BJ (cell line): ENCODE measurements at regions of chr20 and their contacts with region 1.

Region 1: GRCh38 chr20:34876162-34877001 is at the start of gene ACSS2:
- DNase-seq: peak; percentile 86
- H3K4me3 ChIP-seq: peak within 1 kb of the TSS; percentile 78
- H3K27me3 ChIP-seq: no peaks in the 10 kb centered on the region
- CTCF ChIP-seq: no peak
- polyA plus RNA-seq, gene ACSS2: 29.3 and 32.1 TPM in 2 replicates

Region 2: DNA sequence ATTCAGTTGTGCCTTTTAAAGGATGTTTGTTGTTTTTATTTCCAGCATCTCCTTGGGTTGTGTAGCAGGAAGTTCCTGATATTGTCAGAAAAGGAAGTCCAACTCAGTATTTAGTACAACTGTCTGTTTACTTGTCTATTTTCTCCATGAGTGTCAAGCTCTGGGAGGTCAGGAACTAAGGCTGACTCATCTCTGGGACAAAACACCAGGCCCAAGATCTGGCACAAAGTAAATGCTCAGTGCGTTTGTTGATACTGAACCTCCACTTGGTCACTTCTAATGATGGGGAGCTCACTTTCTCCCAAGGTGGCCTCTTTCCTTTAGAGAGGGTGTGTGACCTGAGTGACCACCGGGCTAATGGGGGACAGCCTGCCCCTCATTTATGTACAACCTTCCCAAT is 186.9 kb before region 1 on chr20:
- CTCF ChIA-PET with region 1: no interaction called
- POLR2A ChIA-PET with region 1: no interaction called
- DNase-seq: no peak
- H3K4me3 ChIP-seq: no peak overlapping the region
- H3K27me3 ChIP-seq: no peaks in the 10 kb centered on the region
- CTCF ChIP-seq: no peak

Region 3: DNA sequence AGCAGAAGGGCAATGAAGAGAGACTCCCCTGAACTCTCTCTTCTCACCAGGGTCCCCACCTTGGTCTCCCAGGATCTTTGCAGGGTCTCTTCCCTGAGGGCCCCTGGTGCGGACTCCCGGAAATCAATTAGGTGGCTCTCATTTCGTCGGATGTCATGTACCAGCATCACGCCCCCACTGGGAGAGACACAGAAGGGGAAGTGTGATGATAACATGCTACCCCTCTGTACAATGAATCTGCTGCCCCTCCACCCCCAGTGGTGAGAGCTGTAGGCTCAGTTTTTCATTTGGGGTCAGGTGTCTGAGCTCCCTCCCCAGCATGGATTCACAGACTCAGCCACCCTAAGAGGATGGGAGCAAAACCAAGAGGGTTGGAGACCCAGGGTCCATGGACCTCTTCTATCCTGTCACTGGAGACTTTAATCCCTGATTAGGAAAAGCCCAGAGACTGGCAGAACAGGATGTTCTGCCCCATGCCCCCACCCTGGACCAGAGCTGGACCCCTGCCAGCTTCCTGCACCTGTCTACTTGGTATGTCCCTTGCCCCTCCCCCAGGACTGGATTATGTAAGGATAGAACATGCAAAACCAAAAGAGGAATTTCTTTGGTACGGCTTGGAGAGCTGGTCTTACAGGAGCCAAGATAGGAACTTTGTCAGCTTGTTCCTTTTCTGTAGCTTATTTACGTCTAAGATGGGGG is 14.8 kb before region 1 on chr20:
- CTCF ChIA-PET with region 1: interaction called, 12 read pairs
- POLR2A ChIA-PET with region 1: no interaction called
- DNase-seq: no peak
- H3K4me3 ChIP-seq: no peak overlapping the region
- H3K27me3 ChIP-seq: no peaks in the 10 kb centered on the region
- CTCF ChIP-seq: no peak

Region 4: DNA sequence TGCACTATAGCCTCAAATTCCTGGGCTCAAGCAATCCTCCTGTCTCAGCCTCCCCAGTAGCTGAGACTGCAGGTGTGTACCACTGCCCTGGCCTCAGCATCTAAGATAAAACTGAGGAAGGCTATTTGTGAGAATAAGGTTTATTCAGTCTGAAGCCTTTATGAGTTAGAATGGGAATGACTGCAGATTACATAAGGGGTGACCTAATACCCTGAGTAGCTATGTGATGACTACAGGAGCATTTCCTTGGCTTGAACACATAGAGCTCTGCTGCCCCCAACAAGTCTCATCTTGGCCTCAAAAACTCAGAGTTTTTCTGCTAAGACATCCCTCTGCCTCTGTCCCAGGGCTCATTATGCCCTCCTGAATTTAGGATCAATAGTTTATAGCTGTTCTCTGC is 71.6 kb after region 1 on chr20:
- CTCF ChIA-PET with region 1: interaction called, 26 read pairs
- POLR2A ChIA-PET with region 1: no interaction called
- DNase-seq: peak; percentile 62
- H3K4me3 ChIP-seq: no peak overlapping the region
- H3K27me3 ChIP-seq: no peaks in the 10 kb centered on the region
- CTCF ChIP-seq: no peak

Region 5: GRCh38 chr20:34964486-34964885 is 88.1 kb after region 1 on chr20:
- CTCF ChIA-PET with region 1: interaction called, 61 read pairs
- POLR2A ChIA-PET with region 1: interaction called, 3 read pairs
- DNase-seq: no peak
- H3K4me3 ChIP-seq: no peak overlapping the region
- H3K27me3 ChIP-seq: peaks cover 2% of the 10 kb centered on the region; the same call in 1 of the 2 replicates
- CTCF ChIP-seq: no peak

Region 6: DNA sequence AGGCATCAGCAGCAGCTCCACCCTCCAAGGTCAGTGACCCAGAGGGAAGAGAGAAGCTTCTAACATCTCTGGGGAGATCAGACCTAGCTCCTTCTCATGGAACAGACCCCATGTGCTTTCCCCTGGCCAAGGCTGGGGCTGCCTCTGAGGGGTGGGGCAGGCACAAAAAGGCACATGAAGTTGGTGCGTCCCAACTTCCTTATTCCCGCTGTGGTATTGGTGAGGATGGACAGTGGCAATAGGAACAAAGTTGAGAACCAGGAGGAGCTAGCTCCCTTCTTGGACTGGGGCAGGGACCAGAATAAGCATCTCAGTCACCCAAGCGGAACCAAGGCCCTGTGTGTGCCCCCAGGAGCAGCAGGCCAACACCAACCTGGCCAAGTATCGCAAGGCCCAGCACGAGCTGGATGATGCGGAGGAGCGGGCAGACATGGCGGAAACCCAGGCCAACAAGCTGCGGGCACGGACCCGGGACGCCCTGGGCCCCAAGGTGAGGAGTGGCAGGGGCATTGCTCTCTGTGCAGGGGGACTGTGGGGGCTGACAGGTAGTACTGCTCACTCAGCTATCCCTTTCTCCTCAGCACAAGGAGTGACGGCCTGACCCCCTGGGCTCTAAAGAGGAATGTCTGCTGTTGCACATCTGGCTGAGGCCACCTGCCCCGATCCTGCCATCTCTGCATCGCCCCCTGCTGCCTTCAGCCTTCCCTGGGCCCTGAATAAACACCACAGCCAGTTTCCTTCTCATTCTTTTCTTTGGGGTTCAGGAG is 125.4 kb after region 1 on chr20:
- CTCF ChIA-PET with region 1: interaction called, 17 read pairs
- POLR2A ChIA-PET with region 1: interaction called, 3 read pairs
- DNase-seq: no peak
- H3K4me3 ChIP-seq: no peak overlapping the region
- H3K27me3 ChIP-seq: no peaks in the 10 kb centered on the region
- CTCF ChIP-seq: peak; percentile 37; the same call in 1 of the 2 replicates